WTC11 (cell line): ENCODE measurements at regions of chr7 and their contacts with region 1.

Region 1: GRCh38 chr7:12686894-12687717 is at the start of gene ARL4A:
- DNase-seq: peak; percentile 99
- ATAC-seq: peak; percentile 86
- H3K4me3 Mint-ChIP-seq: peak within 1 kb of the TSS; percentile 88
- H3K27ac Mint-ChIP-seq: peak within 1 kb of the TSS; percentile 94
- H3K4me1 Mint-ChIP-seq: peaks cover 56% of the 10 kb centered on the region
- H3K27me3 Mint-ChIP-seq: no peaks in the 10 kb centered on the region
- CTCF ChIP-seq: peak; percentile 16; the same call in 1 of the 2 replicates
- total RNA-seq, gene ARL4A: 20.9 to 25.4 TPM (median 21.9 TPM) in 3 replicates

Region 2: DNA sequence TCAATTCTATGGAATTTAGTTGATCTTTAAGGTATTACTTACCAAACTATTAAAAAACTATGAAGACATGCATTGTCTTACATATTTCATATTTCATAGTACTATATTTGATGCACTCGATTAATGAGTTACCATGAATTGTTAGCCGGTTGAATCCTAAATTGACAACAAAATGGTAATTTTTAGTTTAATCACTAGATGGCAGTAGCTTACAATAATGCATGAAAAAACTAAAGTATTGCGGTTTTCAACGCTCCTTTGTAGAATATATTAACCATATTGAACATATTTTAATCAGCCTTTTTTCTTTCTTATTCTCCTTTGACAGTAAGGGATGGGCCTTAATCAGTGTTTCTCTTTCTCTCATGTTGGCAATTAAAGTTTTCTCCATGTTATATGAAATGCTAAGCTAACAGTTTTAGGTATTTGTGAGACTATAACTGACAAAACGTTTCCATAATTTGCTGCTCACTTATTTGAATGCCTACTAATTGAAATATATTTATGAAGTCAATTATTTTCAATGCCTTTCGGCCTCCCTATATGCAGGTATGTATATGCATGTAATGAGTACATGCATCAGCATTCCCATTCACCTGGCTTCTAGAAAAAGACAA is 48.1 kb before region 1 on chr7:
- CTCF ChIA-PET with region 1: interaction called, 12 read pairs
- POLR2A ChIA-PET with region 1: no interaction called
- DNase-seq: no peak
- ATAC-seq: no peak
- H3K4me3 Mint-ChIP-seq: no peak overlapping the region
- H3K27ac Mint-ChIP-seq: no peak overlapping the region
- H3K4me1 Mint-ChIP-seq: peaks cover 3% of the 10 kb centered on the region; the same call in 1 of the 2 replicates
- H3K27me3 Mint-ChIP-seq: no peaks in the 10 kb centered on the region
- CTCF ChIP-seq: no peak; the same call in 1 of the 2 replicates

Region 3: DNA sequence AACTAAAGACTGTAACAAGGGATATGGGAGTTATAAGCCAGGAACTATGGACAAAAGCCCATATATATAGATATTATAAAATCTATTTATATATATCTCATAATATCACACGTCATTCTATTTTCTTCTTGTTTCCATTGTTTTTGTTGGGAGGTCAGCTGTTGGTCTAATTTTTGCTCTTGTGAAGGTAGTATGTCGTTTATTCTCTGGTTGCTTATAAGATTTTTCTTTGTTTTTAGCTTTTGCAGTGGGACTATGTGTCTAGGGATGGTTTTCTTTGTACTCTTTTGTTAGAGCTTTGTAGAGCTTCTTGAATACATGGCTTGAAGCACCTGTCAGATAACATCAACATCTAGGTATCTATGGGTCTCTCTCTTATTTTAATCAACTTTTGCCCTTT is 14.3 kb after region 1 on chr7:
- CTCF ChIA-PET with region 1: interaction called, 16 read pairs
- POLR2A ChIA-PET with region 1: interaction called, 5 read pairs
- DNase-seq: no peak
- ATAC-seq: no peak
- H3K4me3 Mint-ChIP-seq: no peak overlapping the region
- H3K27ac Mint-ChIP-seq: no peak overlapping the region
- H3K4me1 Mint-ChIP-seq: peaks cover 3% of the 10 kb centered on the region
- H3K27me3 Mint-ChIP-seq: no peaks in the 10 kb centered on the region; the same call in 1 of the 2 replicates
- CTCF ChIP-seq: no peak

Region 4: GRCh38 chr7:12749069-12749468 is 62.0 kb after region 1 on chr7:
- CTCF ChIA-PET with region 1: interaction called, 10 read pairs
- POLR2A ChIA-PET with region 1: no interaction called
- DNase-seq: no peak
- ATAC-seq: peak; percentile 70
- H3K4me3 Mint-ChIP-seq: peak overlapping the region; percentile 34
- H3K27ac Mint-ChIP-seq: peak overlapping the region; percentile 57; the same call in 1 of the 2 replicates
- H3K4me1 Mint-ChIP-seq: peaks cover 35% of the 10 kb centered on the region
- H3K27me3 Mint-ChIP-seq: no peaks in the 10 kb centered on the region
- CTCF ChIP-seq: no peak

Region 5: DNA sequence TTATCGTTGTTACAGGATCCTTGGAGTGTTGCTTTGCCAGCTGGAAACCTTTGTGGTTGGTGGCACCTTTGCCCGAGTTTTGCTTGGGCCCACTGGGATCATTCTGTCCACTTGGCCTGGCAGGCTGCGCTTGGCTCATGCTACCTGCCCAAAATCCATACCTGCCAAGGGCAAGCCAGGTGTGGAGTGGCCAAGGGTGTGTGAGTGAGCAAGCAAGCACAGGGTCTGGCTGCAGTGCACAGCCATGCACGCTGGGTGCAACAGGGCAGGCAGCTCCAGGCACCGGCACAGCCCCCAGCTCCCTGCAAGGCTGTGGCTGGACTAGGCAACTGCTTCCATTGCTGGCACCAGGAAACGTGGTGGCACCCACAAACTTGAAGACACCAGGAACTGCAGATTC is 422.1 kb after region 1 on chr7:
- CTCF ChIA-PET with region 1: interaction called, 77 read pairs
- POLR2A ChIA-PET with region 1: no interaction called
- DNase-seq: no peak
- ATAC-seq: no peak
- H3K4me3 Mint-ChIP-seq: no peak overlapping the region
- H3K27ac Mint-ChIP-seq: no peak overlapping the region
- H3K4me1 Mint-ChIP-seq: peaks cover 5% of the 10 kb centered on the region
- H3K27me3 Mint-ChIP-seq: no peaks in the 10 kb centered on the region
- CTCF ChIP-seq: no peak